ENCODE measurements at regions of chr6 and their contacts with region 1.

Region 1: DNA sequence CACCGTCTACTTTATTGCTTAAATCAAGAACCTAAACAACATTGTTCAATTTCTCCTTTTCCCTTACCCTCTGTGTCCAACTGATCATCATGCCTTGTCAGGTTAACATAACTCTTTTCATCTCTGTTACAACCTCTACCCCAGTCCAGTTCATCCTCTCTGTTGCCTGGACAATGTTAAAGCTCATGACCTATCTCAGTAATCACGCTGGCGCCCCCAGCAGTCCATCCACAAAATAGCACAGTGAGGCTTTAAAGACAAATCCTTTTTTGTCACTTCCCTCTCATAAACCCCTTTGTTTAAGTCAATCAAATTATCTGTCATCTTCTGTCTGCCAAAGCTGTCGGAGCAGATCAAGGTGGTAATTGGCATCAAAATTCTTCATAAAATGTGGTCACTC is 140.1 kb downstream of the QKI start:
- DNase-seq: peak; percentile 47
- ATAC-seq: no peak
- H3K4me3 ChIP-seq: no peak overlapping the region
- H3K4me3 Mint-ChIP-seq: no peak overlapping the region
- H3K27ac ChIP-seq: no peak overlapping the region
- H3K27ac Mint-ChIP-seq: no peak overlapping the region
- H3K4me1 ChIP-seq: no peaks in the 10 kb centered on the region
- H3K4me1 Mint-ChIP-seq: peaks cover 11% of the 10 kb centered on the region
- H3K27me3 ChIP-seq: no peaks in the 10 kb centered on the region
- H3K27me3 Mint-ChIP-seq: no peaks in the 10 kb centered on the region
- CTCF ChIP-seq: peak; percentile 66

Region 2: GRCh38 chr6:163427498-163428254 is 127.0 kb before region 1 on chr6:
- CTCF ChIA-PET with region 1: interaction called, 3 read pairs
- POLR2A ChIA-PET with region 1: no interaction called
- intact Hi-C with region 1: loop called (anchors 10 kb)
- DNase-seq: peak; percentile 56
- ATAC-seq: no peak
- H3K4me3 ChIP-seq: no peak overlapping the region
- H3K4me3 Mint-ChIP-seq: no peak overlapping the region
- H3K27ac ChIP-seq: no peak overlapping the region
- H3K27ac Mint-ChIP-seq: no peak overlapping the region
- H3K4me1 ChIP-seq: no peaks in the 10 kb centered on the region
- H3K4me1 Mint-ChIP-seq: peaks cover 48% of the 10 kb centered on the region
- H3K27me3 ChIP-seq: no peaks in the 10 kb centered on the region
- H3K27me3 Mint-ChIP-seq: no peaks in the 10 kb centered on the region
- CTCF ChIP-seq: peak; percentile 61